ENCODE measurements at regions of chr12 and their contacts with region 1.

Region 1: DNA sequence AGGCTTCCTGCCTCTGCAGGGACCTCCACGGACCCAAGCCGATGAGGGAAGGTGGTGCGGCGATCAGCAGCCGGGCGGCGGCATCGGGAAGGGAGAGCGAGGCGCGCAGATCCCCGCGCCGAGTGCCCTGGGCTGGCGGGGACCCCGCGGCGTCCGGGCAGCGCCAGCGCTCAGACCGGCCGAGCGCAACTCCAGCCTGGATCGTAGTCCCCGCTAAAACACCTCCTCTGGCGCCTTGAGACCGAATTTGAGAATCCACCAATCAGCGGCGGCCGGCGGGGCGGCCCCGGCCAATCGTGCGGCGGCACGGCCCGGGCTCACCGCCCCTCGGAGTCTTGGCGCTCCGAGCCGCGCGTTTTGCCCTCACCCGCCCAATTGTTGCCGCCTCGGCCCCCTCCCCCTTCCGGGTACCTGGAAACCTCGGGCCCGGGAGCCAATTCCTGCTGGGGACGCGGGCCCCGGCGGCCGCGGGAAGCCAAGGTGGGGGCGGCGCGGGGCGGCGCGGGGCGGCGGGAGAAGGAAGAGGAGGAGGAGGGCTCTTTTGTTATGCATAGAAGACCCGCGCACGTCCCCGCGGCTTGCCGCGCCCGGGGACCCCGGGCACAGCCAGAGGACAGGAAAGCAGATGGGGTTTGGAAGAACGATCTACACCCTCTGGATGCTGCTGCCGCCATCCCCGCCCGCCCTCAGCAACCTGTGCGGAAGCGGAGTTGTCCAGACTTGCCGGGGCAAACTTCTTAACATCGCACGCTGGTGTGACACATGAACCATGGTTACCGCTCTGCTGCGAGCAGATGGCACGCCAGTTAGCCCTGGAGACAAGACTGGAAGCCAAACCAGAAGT is at the start of gene E2F7:
- DNase-seq: peak; percentile 87
- ATAC-seq: peak; percentile 94
- H3K4me3 ChIP-seq: peak within 1 kb of the TSS; percentile 91 to 96
- H3K27ac ChIP-seq: peak within 1 kb of the TSS; percentile 89
- H3K4me1 ChIP-seq: peaks cover 12 to 20% of the 10 kb centered on the region in 2 experiments; a peak in 2 of 4 replicates
- H3K27me3 ChIP-seq: no peaks in the 10 kb centered on the region
- CTCF ChIP-seq: no peak
- POLR2A ChIP-seq: peak; percentile 89
- RAD21 ChIP-seq: no peak
- total RNA-seq, gene E2F7: 19.5 TPM

Region 2: DNA sequence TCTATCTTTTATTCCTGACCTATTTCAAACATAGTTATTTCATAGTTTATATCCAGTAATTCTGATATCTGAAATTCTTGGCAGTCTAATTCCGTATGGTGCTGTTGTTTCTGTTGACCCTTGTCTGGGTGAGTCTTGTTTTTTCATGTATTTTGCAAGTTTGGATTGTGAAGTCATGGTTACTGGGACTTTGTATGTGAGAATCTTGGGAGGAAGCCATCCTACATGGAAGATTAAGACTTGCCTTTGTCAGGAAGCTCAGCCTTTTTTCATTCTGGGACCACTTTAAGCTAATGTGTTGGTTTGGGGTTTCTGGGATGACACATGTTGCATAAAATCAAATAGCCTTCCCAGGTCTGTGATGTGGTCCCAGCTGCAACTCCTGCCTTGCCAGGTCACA is 191.4 kb after region 1 on chr12:
- CTCF ChIA-PET with region 1: no interaction called
- POLR2A ChIA-PET with region 1: no interaction called
- RAD21 ChIA-PET with region 1: no interaction called
- intact Hi-C with region 1: no loop called
- DNase-seq: no peak
- ATAC-seq: no peak
- H3K4me3 ChIP-seq: no peak overlapping the region
- H3K27ac ChIP-seq: no peak overlapping the region
- H3K4me1 ChIP-seq: no peaks in the 10 kb centered on the region
- H3K27me3 ChIP-seq: no peaks in the 10 kb centered on the region
- CTCF ChIP-seq: no peak
- POLR2A ChIP-seq: no peak
- RAD21 ChIP-seq: no peak

Region 3: DNA sequence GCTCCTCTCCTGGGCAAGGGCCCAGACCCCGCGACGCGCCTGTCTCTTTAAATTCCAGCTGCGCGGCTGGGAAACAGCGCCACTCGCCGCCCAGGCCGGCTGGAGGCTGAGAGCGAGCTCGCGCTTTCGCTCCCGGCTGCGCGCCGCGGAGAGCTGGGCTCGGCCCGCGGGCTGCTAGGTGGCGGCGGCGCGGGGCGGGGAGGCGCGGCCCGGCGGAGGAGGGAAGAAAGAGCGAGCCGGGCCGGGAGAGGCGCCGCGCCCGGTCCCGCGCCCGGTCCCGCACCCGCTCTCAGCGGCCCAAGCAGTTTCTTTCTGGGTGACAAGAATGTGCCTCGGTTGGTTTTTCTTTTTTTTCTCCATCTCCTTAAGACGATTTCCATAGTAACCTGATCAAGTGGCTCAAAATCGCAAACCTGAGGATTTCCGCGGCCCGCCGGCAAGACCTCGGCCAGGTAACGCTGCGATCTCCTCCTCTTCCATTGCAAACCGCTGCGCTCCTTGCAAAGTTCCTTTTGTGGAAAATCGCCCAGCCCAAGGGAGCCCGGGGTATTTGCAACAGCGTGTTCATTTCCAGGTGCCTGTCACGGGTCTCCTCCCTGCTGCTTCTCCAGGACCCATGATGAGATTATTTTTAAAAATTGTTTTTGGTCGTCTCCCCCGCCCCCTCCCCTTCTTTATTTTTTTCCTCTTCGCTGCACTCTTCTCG is 259.3 kb after region 1 on chr12:
- CTCF ChIA-PET with region 1: no interaction called
- POLR2A ChIA-PET with region 1: no interaction called
- RAD21 ChIA-PET with region 1: no interaction called
- intact Hi-C with region 1: loop called (anchors 10 kb)
- DNase-seq: peak; percentile 40
- ATAC-seq: peak; percentile 98
- H3K4me3 ChIP-seq: peak overlapping the region; percentile 44 to 61
- H3K27ac ChIP-seq: no peak overlapping the region
- H3K4me1 ChIP-seq: peaks cover 0 to 13% of the 10 kb centered on the region in 2 experiments; a peak in 1 of 4 replicates
- H3K27me3 ChIP-seq: no peaks in the 10 kb centered on the region
- CTCF ChIP-seq: peak; percentile 21 to 52 (median 40); a peak in 5 of 6 replicates
- POLR2A ChIP-seq: no peak
- RAD21 ChIP-seq: peak; percentile 54

Region 4: DNA sequence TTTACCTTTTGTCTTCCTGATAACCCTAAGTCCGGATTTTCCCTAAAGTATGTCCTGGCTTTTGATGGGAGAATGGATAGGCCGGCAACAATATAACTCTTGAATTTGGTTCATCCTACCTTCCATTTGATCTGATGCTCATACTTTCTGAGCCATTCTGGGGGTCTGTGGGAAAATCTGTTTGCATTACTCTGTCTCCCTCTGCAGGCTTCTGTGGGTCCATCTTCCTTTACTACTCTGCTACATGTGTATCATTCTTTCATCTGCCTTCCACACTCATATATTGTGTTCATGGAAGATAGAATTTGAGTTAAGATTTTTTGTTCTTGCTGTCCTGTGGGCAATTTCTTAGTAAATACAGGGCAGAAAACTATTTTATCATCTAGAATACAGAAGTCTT is 866.6 kb after region 1 on chr12:
- CTCF ChIA-PET with region 1: no interaction called
- POLR2A ChIA-PET with region 1: no interaction called
- RAD21 ChIA-PET with region 1: no interaction called
- intact Hi-C with region 1: loop called (anchors 10 kb)
- DNase-seq: no peak
- ATAC-seq: peak; percentile 80
- H3K4me3 ChIP-seq: no peak overlapping the region
- H3K27ac ChIP-seq: no peak overlapping the region
- H3K4me1 ChIP-seq: no peaks in the 10 kb centered on the region
- H3K27me3 ChIP-seq: no peaks in the 10 kb centered on the region
- CTCF ChIP-seq: peak; percentile 16 to 58 (median 47); a peak in 3 of 6 replicates
- POLR2A ChIP-seq: no peak
- RAD21 ChIP-seq: peak; percentile 47